ENCODE measurements at regions of chr14 and their contacts with region 1.

Region 1: GRCh38 chr14:99670361-99671229 is 13.5 kb upstream of the CYP46A1 start:
- DNase-seq: no peak
- H3K4me3 ChIP-seq: no peak overlapping the region
- H3K27ac ChIP-seq: no peak overlapping the region
- H3K4me1 ChIP-seq: peaks cover 15 to 40% (median 30%) of the 10 kb centered on the region in 4 experiments
- H3K27me3 ChIP-seq: no peaks in the 10 kb centered on the region
- CTCF ChIP-seq: no peak
- EP300 ChIP-seq: no peak
- POLR2A ChIP-seq: no peak
- RAD21 ChIP-seq: no peak

Region 2: DNA sequence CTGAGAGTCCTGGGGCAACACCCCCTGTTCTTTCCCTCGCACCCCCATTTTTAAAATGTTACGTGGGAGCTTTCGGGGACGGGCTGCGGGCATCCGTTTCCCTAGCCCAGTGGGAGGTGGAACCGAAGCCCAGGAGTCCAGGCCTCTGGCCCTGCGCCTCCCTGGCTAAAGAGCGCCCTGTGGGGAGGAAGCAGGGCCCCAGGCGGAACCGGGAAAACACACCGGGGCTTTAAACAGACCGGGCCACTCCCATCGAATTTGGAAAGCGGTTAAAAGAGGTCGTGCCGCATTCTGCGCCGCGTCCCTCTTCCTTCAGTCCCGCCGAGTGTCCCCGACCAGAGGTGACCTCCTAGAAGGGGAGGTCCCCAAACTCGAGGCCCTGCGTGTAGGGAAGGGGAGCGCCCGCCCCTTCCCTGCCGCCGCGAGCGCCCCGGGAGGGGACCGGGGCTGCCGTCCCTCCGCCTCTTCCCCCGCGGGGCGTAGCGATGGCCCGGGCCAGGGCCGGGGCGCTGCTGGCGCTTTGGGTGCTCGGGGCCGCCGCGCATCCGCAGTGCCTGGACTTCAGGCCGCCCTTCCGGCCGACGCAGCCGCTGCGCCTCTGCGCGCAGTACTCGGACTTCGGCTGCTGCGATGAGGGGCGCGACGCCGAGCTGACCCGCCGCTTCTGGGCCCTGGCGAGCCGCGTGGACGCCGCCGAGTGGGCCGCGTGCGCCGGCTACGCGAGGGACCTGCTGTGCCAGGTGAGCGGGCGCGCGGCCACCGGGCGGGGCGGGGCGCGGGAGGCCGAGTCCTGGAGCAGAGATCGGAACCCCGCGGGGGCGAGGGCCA is 25.7 kb before region 1 on chr14 and contains the start of gene HHIPL1:
- CTCF ChIA-PET with region 1: interaction called, 13 read pairs
- POLR2A ChIA-PET with region 1: no interaction called
- DNase-seq: peak in 1 of 2 experiments; percentile 70
- H3K4me3 ChIP-seq: peak within 1 kb of the TSS; percentile 40 to 75 (median 56)
- H3K27ac ChIP-seq: no peak within 1 kb of the TSS
- H3K4me1 ChIP-seq: peaks cover 0 to 14% (median 5%) of the 10 kb centered on the region in 4 experiments; a peak in 5 of 7 replicates
- H3K27me3 ChIP-seq: peaks cover 0 to 30% (median 22%) of the 10 kb centered on the region in 4 experiments; a peak in 6 of 7 replicates
- CTCF ChIP-seq: no peak
- EP300 ChIP-seq: no peak
- POLR2A ChIP-seq: no peak
- RAD21 ChIP-seq: no peak
- total RNA-seq, gene HHIPL1: 2.6 and 3.1 TPM in 2 replicates